ENCODE measurements at regions of chr7 and their contacts with region 1.

Region 1: DNA sequence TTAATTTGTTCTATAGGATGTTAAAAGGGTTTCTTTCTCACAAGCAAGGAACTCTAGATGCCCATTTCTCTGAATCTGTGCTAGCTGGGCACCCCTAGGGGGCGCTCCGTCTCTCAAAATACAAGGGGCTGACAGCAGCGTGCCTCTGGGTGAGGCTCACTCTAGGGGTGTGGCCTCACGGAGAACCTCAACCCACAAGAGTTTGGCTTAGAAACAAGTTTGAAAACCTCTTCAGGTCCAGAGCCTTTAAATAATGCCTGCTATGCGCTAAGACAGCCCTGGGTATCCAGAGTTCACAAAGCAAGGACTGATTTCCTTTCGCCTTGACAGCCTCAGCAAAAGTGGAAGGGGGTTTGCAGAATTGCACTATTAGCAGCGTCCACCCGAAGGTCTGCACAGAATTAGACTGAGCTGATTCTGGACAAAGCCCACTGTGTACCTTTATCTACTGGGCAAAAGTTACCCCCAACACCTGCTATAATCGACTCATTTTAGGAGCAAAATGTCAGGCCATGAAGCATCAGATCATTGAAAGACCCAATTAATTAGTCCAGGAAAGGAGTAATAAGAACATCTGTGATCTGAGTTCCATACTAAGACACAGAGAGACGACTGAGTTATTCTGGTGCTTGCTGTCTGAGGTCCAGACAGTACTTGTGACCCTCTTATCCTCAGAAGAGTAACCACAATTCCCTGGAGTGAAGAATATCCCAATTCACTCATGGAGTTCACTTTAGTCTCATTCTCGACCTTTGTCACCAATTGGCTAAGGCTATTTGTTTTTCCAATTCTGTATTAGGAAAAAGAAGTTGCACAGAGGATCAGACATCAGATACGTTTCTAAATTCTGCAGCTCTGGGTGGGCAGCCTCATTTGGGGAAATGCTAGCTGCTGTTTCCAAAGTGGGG is 574 bp upstream of the CPED1 start:
- DNase-seq: peak; percentile 57 to 97 (median 80)

Region 2: DNA sequence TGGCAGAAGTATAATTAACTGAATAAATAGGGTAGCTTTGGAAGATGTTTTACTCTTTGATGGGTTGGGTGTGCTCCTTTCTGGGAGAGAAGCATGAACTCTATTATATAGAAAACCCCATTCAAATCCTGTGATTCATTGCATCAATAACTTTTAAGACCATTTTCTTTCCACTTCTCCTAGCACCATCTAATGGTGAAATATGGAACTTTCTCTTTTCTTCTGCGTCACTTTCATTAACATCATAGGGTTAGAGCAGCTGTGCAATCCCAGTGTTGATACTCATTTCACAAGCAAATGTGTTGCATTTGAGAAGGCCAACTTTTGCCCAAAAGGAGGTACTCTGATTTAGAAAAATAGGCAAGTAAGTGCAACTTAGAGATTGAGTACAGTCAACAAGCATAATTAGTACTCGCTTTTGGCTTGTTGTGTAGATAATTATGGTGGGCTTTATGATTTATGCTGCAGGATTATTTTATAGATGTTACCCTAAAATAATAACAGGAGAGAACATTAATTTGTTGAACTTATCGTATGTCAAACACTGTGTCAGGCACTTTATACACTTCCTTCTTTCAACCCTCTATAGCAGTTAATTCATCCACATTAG is 93.5 kb after region 1 on chr7:
- intact Hi-C with region 1: loop called (anchors 1 kb)
- DNase-seq: no peak

Region 3: GRCh38 chr7:121107923-121108498 is 120.1 kb after region 1 on chr7:
- intact Hi-C with region 1: loop called (anchors 2 kb)
- DNase-seq: no peak

Region 4: GRCh38 chr7:121273467-121274167 is 285.7 kb after region 1 on chr7:
- intact Hi-C with region 1: no loop called
- DNase-seq: no peak

Measured in posterior cingulate gyrus (tissue), 11 donors.